CD8-positive, alpha-beta T cell (primary cell): ENCODE measurements at regions of chr6 and their contacts with region 1.

Region 1: DNA sequence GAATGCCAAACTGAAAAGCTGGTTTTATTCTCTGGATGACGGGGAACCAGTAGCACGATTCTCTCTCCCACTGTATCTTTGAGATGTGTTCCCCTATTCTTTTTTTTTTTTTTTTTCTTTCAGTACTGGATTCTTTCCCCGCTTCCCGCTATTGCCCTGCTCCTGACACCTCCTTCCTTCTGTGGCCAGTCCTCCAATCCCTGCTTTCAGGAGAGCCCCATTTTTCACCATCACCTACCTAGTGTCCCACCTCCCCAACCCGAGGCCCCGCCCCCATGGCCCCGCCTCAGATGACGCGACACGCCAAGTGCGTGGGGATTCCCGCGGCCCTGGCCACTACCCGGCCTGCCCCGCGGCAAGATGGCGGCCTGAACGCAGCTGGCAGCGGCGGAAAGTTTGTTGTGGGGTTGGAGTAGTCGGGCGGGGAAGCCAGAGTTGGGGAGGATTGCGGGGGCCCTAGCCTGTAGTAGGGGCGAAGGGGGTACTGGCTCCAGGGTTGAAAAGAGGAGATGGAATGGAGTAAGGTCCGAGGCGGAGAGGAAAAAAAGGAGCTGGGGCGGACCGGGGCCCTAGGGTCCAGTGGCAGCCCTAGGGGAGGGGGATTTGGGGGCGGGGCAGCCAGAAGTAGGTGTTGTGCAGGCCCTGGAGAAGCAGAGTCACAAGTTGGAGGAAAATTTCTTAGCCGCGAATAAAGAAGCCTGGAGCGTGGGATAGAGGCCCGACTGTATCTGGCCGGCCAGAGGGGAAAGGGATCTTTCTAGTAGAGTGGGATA is at the start of gene TJAP1:
- DNase-seq: peak; percentile 93 to 98 (median 96)
- ATAC-seq: peak; percentile 99
- H3K4me3 ChIP-seq: peak within 1 kb of the TSS; percentile 64 to 83
- H3K4me3 Mint-ChIP-seq: peak within 1 kb of the TSS; percentile 95
- H3K27ac ChIP-seq: peak within 1 kb of the TSS; percentile 93 to 95
- H3K27ac Mint-ChIP-seq: peak within 1 kb of the TSS; percentile 97
- H3K4me1 ChIP-seq: peaks cover 17% of the 10 kb centered on the region
- H3K4me1 Mint-ChIP-seq: peaks cover 48% of the 10 kb centered on the region
- H3K27me3 ChIP-seq: no peaks in the 10 kb centered on the region
- H3K27me3 Mint-ChIP-seq: no peaks in the 10 kb centered on the region
- CTCF ChIP-seq: no peak
- total RNA-seq, gene TJAP1: 29.2 to 29.7 TPM

Region 2: GRCh38 chr6:43247113-43247999 is 230.1 kb before region 1 on chr6:
- CTCF ChIA-PET with region 1: no interaction called
- POLR2A ChIA-PET with region 1: no interaction called
- intact Hi-C with region 1: loop called in 1 of 2 experiments (anchors 5 kb)
- DNase-seq: peak; percentile 59 to 87 (median 78)
- ATAC-seq: peak; percentile 95
- H3K4me3 ChIP-seq: peak overlapping the region; percentile 65 to 71
- H3K4me3 Mint-ChIP-seq: no peak overlapping the region
- H3K27ac ChIP-seq: peak overlapping the region; percentile 19 to 40
- H3K27ac Mint-ChIP-seq: peak overlapping the region; percentile 88
- H3K4me1 ChIP-seq: peaks cover 11% of the 10 kb centered on the region
- H3K4me1 Mint-ChIP-seq: peaks cover 15% of the 10 kb centered on the region
- H3K27me3 ChIP-seq: peaks cover 11 to 22% of the 10 kb centered on the region in 2 experiments
- H3K27me3 Mint-ChIP-seq: peaks cover 16% of the 10 kb centered on the region
- CTCF ChIP-seq: no peak

Region 3: GRCh38 chr6:43355862-43356590 is 121.4 kb before region 1 on chr6:
- CTCF ChIA-PET with region 1: no interaction called
- POLR2A ChIA-PET with region 1: no interaction called
- intact Hi-C with region 1: no loop called
- DNase-seq: no peak
- ATAC-seq: peak; percentile 34
- H3K4me3 ChIP-seq: no peak overlapping the region
- H3K4me3 Mint-ChIP-seq: no peak overlapping the region
- H3K27ac ChIP-seq: no peak overlapping the region
- H3K27ac Mint-ChIP-seq: no peak overlapping the region
- H3K4me1 ChIP-seq: no peaks in the 10 kb centered on the region
- H3K4me1 Mint-ChIP-seq: peaks cover 3% of the 10 kb centered on the region
- H3K27me3 ChIP-seq: no peaks in the 10 kb centered on the region
- H3K27me3 Mint-ChIP-seq: no peaks in the 10 kb centered on the region
- CTCF ChIP-seq: no peak

Region 4: GRCh38 chr6:43369174-43370022 is 108.0 kb before region 1 on chr6 and contains the start of gene ZNF318:
- CTCF ChIA-PET with region 1: no interaction called
- POLR2A ChIA-PET with region 1: interaction called, 3 read pairs
- intact Hi-C with region 1: loop called (anchors 1 kb)
- DNase-seq: peak; percentile 85 to 98 (median 93)
- ATAC-seq: peak; percentile 95
- H3K4me3 ChIP-seq: peak within 1 kb of the TSS; percentile 69 to 81
- H3K4me3 Mint-ChIP-seq: peak within 1 kb of the TSS; percentile 89
- H3K27ac ChIP-seq: peak within 1 kb of the TSS; percentile 76 to 87
- H3K27ac Mint-ChIP-seq: peak within 1 kb of the TSS; percentile 96
- H3K4me1 ChIP-seq: peaks cover 33% of the 10 kb centered on the region
- H3K4me1 Mint-ChIP-seq: peaks cover 43% of the 10 kb centered on the region
- H3K27me3 ChIP-seq: no peaks in the 10 kb centered on the region
- H3K27me3 Mint-ChIP-seq: no peaks in the 10 kb centered on the region
- CTCF ChIP-seq: no peak
- total RNA-seq, gene ZNF318: 18.2 TPM

Region 5: GRCh38 chr6:43454696-43455530 is 22.5 kb before region 1 on chr6:
- CTCF ChIA-PET with region 1: interaction called, 4 read pairs
- POLR2A ChIA-PET with region 1: interaction called, 5 read pairs
- intact Hi-C with region 1: loop called (anchors 1 kb)
- DNase-seq: peak in 7 of 9 experiments; percentile 17 to 69 (median 39)
- ATAC-seq: peak; percentile 51
- H3K4me3 ChIP-seq: peak overlapping the region; percentile 57 to 73
- H3K4me3 Mint-ChIP-seq: peak overlapping the region; percentile 82
- H3K27ac ChIP-seq: no peak overlapping the region
- H3K27ac Mint-ChIP-seq: peak overlapping the region; percentile 41
- H3K4me1 ChIP-seq: peaks cover 7% of the 10 kb centered on the region
- H3K4me1 Mint-ChIP-seq: peaks cover 15% of the 10 kb centered on the region
- H3K27me3 ChIP-seq: no peaks in the 10 kb centered on the region
- H3K27me3 Mint-ChIP-seq: no peaks in the 10 kb centered on the region
- CTCF ChIP-seq: peak; percentile 41

Region 6: GRCh38 chr6:43496370-43497128 is 19.1 kb after region 1 on chr6:
- CTCF ChIA-PET with region 1: interaction called, 3 read pairs
- POLR2A ChIA-PET with region 1: interaction called, 10 read pairs
- intact Hi-C with region 1: no loop called
- DNase-seq: peak in 3 of 9 experiments; percentile 23 to 42 (median 35)
- ATAC-seq: peak; percentile 44
- H3K4me3 ChIP-seq: no peak overlapping the region
- H3K4me3 Mint-ChIP-seq: no peak overlapping the region
- H3K27ac ChIP-seq: no peak overlapping the region
- H3K27ac Mint-ChIP-seq: no peak overlapping the region
- H3K4me1 ChIP-seq: peaks cover 15% of the 10 kb centered on the region
- H3K4me1 Mint-ChIP-seq: peaks cover 27% of the 10 kb centered on the region
- H3K27me3 ChIP-seq: no peaks in the 10 kb centered on the region
- H3K27me3 Mint-ChIP-seq: no peaks in the 10 kb centered on the region
- CTCF ChIP-seq: no peak

Region 7: DNA sequence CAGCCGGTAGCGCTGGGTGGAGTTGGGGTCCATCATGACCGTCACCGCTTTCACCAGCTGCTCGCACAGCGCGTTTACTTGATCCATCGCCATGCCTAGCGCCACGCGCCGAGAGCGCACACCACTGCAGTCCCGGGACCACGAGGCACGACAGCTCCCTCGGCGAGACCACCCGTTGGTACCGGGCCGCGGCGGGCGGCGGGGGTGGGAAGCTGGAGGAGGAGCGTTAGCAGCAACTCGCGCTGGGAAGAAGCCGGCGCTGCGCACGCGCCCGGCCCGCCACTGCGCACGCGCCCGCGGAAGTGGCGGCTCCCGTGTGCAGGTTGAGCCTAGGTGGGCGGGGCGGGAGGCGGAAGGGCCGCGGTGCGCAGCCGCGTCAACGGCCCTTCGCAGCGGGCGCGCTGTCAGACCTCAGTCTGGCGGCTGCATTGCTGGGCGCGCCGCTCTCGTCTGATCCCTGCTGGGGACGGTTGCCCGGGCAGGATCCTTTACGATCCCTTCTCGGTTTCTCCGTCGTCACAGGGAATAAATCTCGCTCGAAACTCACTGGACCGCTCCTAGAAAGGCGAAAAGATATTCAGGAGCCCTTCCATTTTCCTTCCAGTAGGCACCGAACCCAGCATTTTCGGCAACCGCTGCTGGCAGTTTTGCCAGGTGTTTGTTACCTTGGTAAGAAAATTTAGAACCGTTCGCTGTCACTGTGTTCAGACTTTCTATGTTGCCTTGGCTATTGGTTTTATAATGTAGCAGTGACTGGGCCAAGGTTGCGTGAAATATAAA is 98.5 kb after region 1 on chr6 and contains the starts of genes POLH and XPO5:
- CTCF ChIA-PET with region 1: no interaction called
- POLR2A ChIA-PET with region 1: no interaction called
- intact Hi-C with region 1: loop called (anchors 1 to 5 kb)
- DNase-seq: peak; percentile 80 to 97 (median 90)
- ATAC-seq: peak; percentile 96
- H3K4me3 ChIP-seq: peak within 1 kb of the TSS; percentile 78 to 89
- H3K4me3 Mint-ChIP-seq: peak within 1 kb of the TSS; percentile 95
- H3K27ac ChIP-seq: peak within 1 kb of the TSS; percentile 55 to 66
- H3K27ac Mint-ChIP-seq: peak within 1 kb of the TSS; percentile 93
- H3K4me1 ChIP-seq: peaks cover 20% of the 10 kb centered on the region
- H3K4me1 Mint-ChIP-seq: peaks cover 36% of the 10 kb centered on the region
- H3K27me3 ChIP-seq: no peaks in the 10 kb centered on the region
- H3K27me3 Mint-ChIP-seq: no peaks in the 10 kb centered on the region
- CTCF ChIP-seq: no peak
- total RNA-seq, gene POLH: 3.4 to 3.7 TPM
- total RNA-seq, gene XPO5: 29.6 to 39.9 TPM

Region 8: GRCh38 chr6:43629505-43630300 is 152.3 kb after region 1 on chr6:
- CTCF ChIA-PET with region 1: no interaction called
- POLR2A ChIA-PET with region 1: no interaction called
- intact Hi-C with region 1: loop called in 1 of 2 experiments (anchors 5 kb)
- DNase-seq: peak; percentile 66 to 96 (median 84)
- ATAC-seq: peak; percentile 51
- H3K4me3 ChIP-seq: peak overlapping the region; percentile 77 to 82
- H3K4me3 Mint-ChIP-seq: peak overlapping the region; percentile 98
- H3K27ac ChIP-seq: peak overlapping the region; percentile 53 to 75
- H3K27ac Mint-ChIP-seq: peak overlapping the region; percentile 95
- H3K4me1 ChIP-seq: peaks cover 15% of the 10 kb centered on the region
- H3K4me1 Mint-ChIP-seq: peaks cover 39% of the 10 kb centered on the region
- H3K27me3 ChIP-seq: no peaks in the 10 kb centered on the region
- H3K27me3 Mint-ChIP-seq: no peaks in the 10 kb centered on the region
- CTCF ChIP-seq: no peak

Region 9: DNA sequence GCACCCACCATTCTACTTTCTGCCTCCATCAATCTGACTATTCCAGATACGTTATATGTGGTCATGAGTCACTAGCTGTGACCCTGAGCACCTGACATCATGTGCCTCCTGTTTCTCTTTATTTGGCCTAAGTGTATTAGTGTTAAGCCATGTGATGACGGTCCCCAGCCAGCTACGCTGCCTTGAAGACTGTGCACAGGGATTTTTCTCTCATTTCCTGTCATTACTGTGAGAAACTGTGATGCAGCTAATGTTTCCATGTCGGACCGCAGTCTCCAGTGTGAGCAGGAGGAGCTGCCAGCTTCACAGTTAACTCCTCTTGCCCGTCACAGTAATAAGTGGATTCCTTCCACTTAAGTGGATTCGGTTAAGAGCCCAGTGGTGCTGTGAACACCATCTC is 855.2 kb after region 1 on chr6:
- CTCF ChIA-PET with region 1: no interaction called
- POLR2A ChIA-PET with region 1: no interaction called
- intact Hi-C with region 1: no loop called
- DNase-seq: no peak
- ATAC-seq: no peak
- H3K4me3 ChIP-seq: no peak overlapping the region
- H3K4me3 Mint-ChIP-seq: no peak overlapping the region
- H3K27ac ChIP-seq: no peak overlapping the region
- H3K27ac Mint-ChIP-seq: no peak overlapping the region
- H3K4me1 ChIP-seq: no peaks in the 10 kb centered on the region
- H3K4me1 Mint-ChIP-seq: no peaks in the 10 kb centered on the region
- H3K27me3 ChIP-seq: peaks cover 0 to 4% of the 10 kb centered on the region in 2 experiments
- H3K27me3 Mint-ChIP-seq: peaks cover 25% of the 10 kb centered on the region
- CTCF ChIP-seq: no peak